ENCODE measurements at regions of chr1 and their contacts with region 1.

Region 1: GRCh38 chr1:171801487-171801891 is 20.0 kb downstream of the METTL13 start:
- DNase-seq: peak; percentile 41
- H3K4me3 ChIP-seq: no peak overlapping the region
- H3K27ac ChIP-seq: no peak overlapping the region
- H3K4me1 ChIP-seq: no peaks in the 10 kb centered on the region
- CTCF ChIP-seq: peak; percentile 85

Region 2: GRCh38 chr1:171984850-171985485 is 183.5 kb after region 1 on chr1:
- CTCF ChIA-PET with region 1: interaction called, 12 read pairs
- POLR2A ChIA-PET with region 1: no interaction called
- intact Hi-C with region 1: loop called (anchors 1 kb)
- DNase-seq: peak; percentile 40
- H3K4me3 ChIP-seq: no peak overlapping the region
- H3K27ac ChIP-seq: no peak overlapping the region
- H3K4me1 ChIP-seq: no peaks in the 10 kb centered on the region
- CTCF ChIP-seq: peak; percentile 91

Measured in OCI-LY7 (cell line).